Left lung (tissue), 14 donors: ENCODE measurements at regions of chr21 and their contacts with region 1.

Region 1: GRCh38 chr21:46097336-46098293 is at the start of gene COL6A2:
- DNase-seq: peak in 3 of 4 donors; percentile 53 to 87 (median 80)
- ATAC-seq: peak; percentile 86
- H3K4me3 ChIP-seq: peak within 1 kb of the TSS; percentile 48 to 53
- H3K27ac ChIP-seq: peak within 1 kb of the TSS; percentile 61 to 81
- H3K4me1 ChIP-seq: peaks cover 0 to 5% of the 10 kb centered on the region in 2 donors
- H3K27me3 ChIP-seq: peaks cover 24 to 65% of the 10 kb centered on the region in 2 donors
- CTCF ChIP-seq: no peak
- polyA plus RNA-seq, gene COL6A2: 362 to 647 (median 454) TPM

Region 2: GRCh38 chr21:45724345-45724961 is 373.2 kb before region 1 on chr21:
- intact Hi-C with region 1: no loop called
- DNase-seq: peak in 1 of 4 donors; percentile 1
- ATAC-seq: no peak
- H3K4me3 ChIP-seq: no peak overlapping the region
- H3K27ac ChIP-seq: no peak overlapping the region
- H3K4me1 ChIP-seq: no peaks in the 10 kb centered on the region
- H3K27me3 ChIP-seq: no peaks in the 10 kb centered on the region
- CTCF ChIP-seq: no peak

Region 3: DNA sequence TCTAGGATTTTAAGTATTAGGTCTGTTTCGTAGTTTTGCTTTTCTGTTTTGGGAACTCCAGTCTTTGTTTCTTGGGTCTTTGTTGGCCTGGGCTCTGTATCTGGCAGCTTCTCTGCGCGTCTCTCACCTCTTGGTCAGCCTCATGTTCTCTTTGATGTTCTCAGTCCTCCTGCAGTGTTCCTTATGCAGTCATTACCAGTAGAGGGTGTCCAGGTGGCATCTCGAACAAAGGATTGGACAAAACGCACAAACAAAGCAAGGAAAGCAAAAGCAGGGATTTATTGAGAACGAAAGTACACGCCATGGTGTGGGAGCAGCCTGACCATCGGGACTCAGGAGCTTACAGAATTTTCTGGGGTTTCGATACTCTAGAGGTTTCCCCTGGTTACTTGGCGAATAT is 249.7 kb before region 1 on chr21:
- intact Hi-C with region 1: no loop called
- DNase-seq: no peak
- ATAC-seq: no peak
- H3K4me3 ChIP-seq: no peak overlapping the region
- H3K27ac ChIP-seq: no peak overlapping the region
- H3K4me1 ChIP-seq: no peaks in the 10 kb centered on the region
- H3K27me3 ChIP-seq: no peaks in the 10 kb centered on the region
- CTCF ChIP-seq: no peak

Region 4: GRCh38 chr21:45981151-45982089 is 116.2 kb before region 1 on chr21 and contains the start of gene COL6A1:
- intact Hi-C with region 1: loop called in 1 of 2 experiments (anchors 5 kb)
- DNase-seq: peak; percentile 79 to 89 (median 82)
- ATAC-seq: peak; percentile 77
- H3K4me3 ChIP-seq: peak within 1 kb of the TSS; percentile 52
- H3K27ac ChIP-seq: peak within 1 kb of the TSS; percentile 66 to 78
- H3K4me1 ChIP-seq: peaks cover 3 to 17% of the 10 kb centered on the region in 2 donors
- H3K27me3 ChIP-seq: peaks cover 0 to 56% of the 10 kb centered on the region in 2 donors
- CTCF ChIP-seq: no peak
- polyA plus RNA-seq, gene COL6A1: 309 to 574 (median 406) TPM